ENCODE measurements at regions of chr9 and their contacts with region 1.

Region 1: GRCh38 chr9:37485389-37486219 is at the start of gene POLR1E:
- DNase-seq: peak; percentile 92
- ATAC-seq: peak; percentile 95
- H3K4me3 ChIP-seq: peak within 1 kb of the TSS; percentile 79 to 86 (median 82)
- H3K27ac ChIP-seq: peak within 1 kb of the TSS; percentile 84
- H3K4me1 ChIP-seq: peaks cover 52% of the 10 kb centered on the region
- H3K27me3 ChIP-seq: no peaks in the 10 kb centered on the region; a peak in 1 of 5 replicates
- CTCF ChIP-seq: peak; percentile 41
- EP300 ChIP-seq: no peak
- POLR2A ChIP-seq: peak; percentile 88 to 91
- RAD21 ChIP-seq: no peak
- total RNA-seq, gene POLR1E: 37.8 and 49.1 TPM in 2 replicates

Region 2: GRCh38 chr9:37239224-37239859 is 246.3 kb before region 1 on chr9:
- CTCF ChIA-PET with region 1: no interaction called
- POLR2A ChIA-PET with region 1: no interaction called
- in situ Hi-C with region 1: no loop called
- intact Hi-C with region 1: no loop called
- DNase-seq: peak; percentile 45
- ATAC-seq: peak; percentile 75
- H3K4me3 ChIP-seq: no peak overlapping the region
- H3K27ac ChIP-seq: peak overlapping the region; percentile 45
- H3K4me1 ChIP-seq: peaks cover 19% of the 10 kb centered on the region
- H3K27me3 ChIP-seq: no peaks in the 10 kb centered on the region
- CTCF ChIP-seq: no peak
- EP300 ChIP-seq: no peak
- POLR2A ChIP-seq: no peak
- RAD21 ChIP-seq: no peak

Region 3: DNA sequence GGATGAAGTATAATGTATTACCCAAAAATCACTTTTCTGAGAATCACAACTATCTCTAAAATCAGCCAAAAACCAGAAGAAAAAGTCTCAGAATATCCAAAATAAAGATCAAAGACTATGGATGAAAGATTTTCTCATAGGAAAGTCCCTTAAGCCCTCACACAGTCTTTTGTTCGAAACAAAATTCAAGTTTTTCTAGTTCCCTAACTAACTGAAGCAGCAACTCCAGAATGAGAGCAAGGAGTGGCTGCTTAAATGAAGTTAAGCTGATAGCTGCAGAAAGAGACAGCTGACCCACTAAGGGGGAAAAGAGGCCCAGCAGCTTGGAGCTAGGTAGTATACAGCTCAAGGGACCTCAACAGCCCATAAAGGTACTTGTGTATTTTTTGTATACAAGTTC is 28.8 kb before region 1 on chr9:
- CTCF ChIA-PET with region 1: no interaction called
- POLR2A ChIA-PET with region 1: no interaction called
- in situ Hi-C with region 1: no loop called
- intact Hi-C with region 1: no loop called
- DNase-seq: no peak
- ATAC-seq: no peak
- H3K4me3 ChIP-seq: no peak overlapping the region
- H3K27ac ChIP-seq: no peak overlapping the region
- H3K4me1 ChIP-seq: peaks cover 76% of the 10 kb centered on the region
- H3K27me3 ChIP-seq: no peaks in the 10 kb centered on the region
- CTCF ChIP-seq: no peak
- EP300 ChIP-seq: no peak
- POLR2A ChIP-seq: no peak
- RAD21 ChIP-seq: no peak

Region 4: GRCh38 chr9:37511016-37512010 is 25.7 kb after region 1 on chr9:
- CTCF ChIA-PET with region 1: no interaction called
- POLR2A ChIA-PET with region 1: interaction called, 16 read pairs
- in situ Hi-C with region 1: no loop called
- intact Hi-C with region 1: no loop called
- DNase-seq: peak; percentile 29
- ATAC-seq: peak; percentile 21
- H3K4me3 ChIP-seq: no peak overlapping the region
- H3K27ac ChIP-seq: no peak overlapping the region
- H3K4me1 ChIP-seq: peaks cover 44% of the 10 kb centered on the region
- H3K27me3 ChIP-seq: no peaks in the 10 kb centered on the region
- CTCF ChIP-seq: peak; percentile 56
- EP300 ChIP-seq: no peak
- POLR2A ChIP-seq: no peak
- RAD21 ChIP-seq: no peak

Region 5: GRCh38 chr9:37550781-37551180 is 65.2 kb after region 1 on chr9:
- CTCF ChIA-PET with region 1: no interaction called
- POLR2A ChIA-PET with region 1: no interaction called
- in situ Hi-C with region 1: no loop called
- intact Hi-C with region 1: no loop called
- DNase-seq: no peak
- ATAC-seq: no peak
- H3K4me3 ChIP-seq: no peak overlapping the region
- H3K27ac ChIP-seq: no peak overlapping the region
- H3K4me1 ChIP-seq: no peaks in the 10 kb centered on the region
- H3K27me3 ChIP-seq: no peaks in the 10 kb centered on the region
- CTCF ChIP-seq: no peak
- EP300 ChIP-seq: no peak
- POLR2A ChIP-seq: no peak
- RAD21 ChIP-seq: no peak

Region 6: DNA sequence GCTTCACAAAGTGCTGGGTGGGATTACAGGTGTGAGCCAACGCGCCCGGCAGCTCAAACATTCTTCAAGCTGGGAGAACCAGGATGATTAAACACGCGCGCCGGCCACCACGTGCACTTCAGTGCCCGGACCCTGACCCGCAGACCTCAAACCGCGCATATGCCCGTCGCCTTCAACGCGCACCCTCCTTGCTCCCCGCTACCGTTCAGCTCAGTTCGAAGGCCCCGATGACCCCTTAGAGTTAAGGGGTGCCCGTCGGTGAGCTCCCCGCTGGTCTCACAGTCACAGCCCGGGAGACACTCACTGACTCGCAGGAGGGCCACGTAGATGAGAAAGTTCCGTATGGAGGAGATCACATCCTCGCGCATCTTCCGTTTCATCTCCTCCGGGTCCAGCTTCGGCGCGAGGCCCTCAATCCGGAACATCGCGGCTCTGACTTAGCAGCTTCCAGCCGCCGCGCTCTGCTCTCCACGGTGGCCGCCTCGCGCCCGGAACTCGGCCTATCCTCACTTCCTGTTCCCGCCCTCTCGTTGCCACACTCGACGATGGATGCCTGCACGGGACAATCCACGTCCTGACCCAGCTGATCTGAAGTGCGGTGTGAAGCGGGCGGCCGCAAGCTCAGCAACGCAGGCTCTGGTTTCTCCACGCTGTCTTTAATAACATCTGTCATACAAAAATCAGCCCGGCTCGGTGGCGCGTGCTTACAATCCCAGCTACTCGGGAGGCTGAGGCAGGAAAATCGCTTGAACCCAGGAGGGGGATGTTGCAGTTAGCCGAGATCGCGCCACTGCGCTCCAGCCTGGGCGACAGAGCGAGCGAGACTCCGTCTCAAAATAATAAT is 106.7 kb after region 1 on chr9 and contains the start of gene TOMM5:
- CTCF ChIA-PET with region 1: interaction called, 3 read pairs
- POLR2A ChIA-PET with region 1: interaction called, 14 read pairs
- in situ Hi-C with region 1: loop called (anchors 5 kb)
- intact Hi-C with region 1: loop called (anchors 5 kb)
- DNase-seq: peak; percentile 87
- ATAC-seq: peak; percentile 95
- H3K4me3 ChIP-seq: peak within 1 kb of the TSS; percentile 64 to 89 (median 80)
- H3K27ac ChIP-seq: peak within 1 kb of the TSS; percentile 87
- H3K4me1 ChIP-seq: peaks cover 54% of the 10 kb centered on the region
- H3K27me3 ChIP-seq: no peaks in the 10 kb centered on the region; a peak in 1 of 5 replicates
- CTCF ChIP-seq: peak; percentile 32; the same call in 1 of the 2 replicates
- EP300 ChIP-seq: peak; percentile 19 to 71; a peak in 1 of 4 replicates
- POLR2A ChIP-seq: peak; percentile 95 to 97
- RAD21 ChIP-seq: no peak; the same call in 1 of the 2 replicates
- total RNA-seq, gene TOMM5: 315 and 450 TPM in 2 replicates

Region 7: DNA sequence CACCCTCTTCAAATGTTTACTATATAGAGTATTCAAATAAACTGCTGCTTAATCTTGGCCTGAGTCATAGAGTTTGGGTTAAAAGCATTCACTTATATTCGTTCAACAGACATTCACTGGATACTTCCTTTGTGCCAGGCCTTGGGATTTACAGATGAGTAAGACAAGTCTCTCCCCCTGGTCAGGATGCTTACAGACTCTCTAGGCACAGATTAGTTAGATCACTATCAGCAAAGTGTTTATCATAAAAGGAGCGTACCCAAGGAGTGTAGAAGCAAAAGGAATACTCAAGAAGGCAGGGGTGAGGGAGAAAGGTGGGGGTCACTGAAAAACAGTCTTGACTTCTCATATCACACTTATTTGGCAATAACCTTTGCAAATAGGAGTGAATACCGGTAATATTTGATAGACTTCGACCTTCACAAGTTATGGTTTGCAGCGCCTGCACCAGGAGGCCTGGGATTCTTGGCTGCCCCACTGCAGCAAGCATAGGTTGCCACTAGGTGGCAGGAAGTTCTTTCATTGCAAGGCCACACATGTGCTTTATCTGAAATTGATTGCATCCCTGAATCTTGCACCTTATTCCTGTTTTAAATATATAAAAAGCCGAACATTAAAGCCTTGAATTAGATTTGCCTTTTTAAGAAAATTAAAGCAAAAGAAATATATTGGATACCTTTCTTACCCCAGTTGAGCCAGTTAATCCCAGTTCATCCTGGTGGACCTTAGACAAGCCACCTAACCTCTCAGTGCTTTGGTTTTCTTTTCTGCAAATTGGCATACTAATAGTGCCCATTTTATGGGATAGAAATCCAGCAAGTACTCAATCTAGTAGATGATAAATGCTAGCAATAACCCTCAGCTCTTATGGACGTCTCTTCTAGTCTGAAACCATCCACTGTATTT is 261.5 kb after region 1 on chr9:
- CTCF ChIA-PET with region 1: interaction called, 3 read pairs
- POLR2A ChIA-PET with region 1: no interaction called
- in situ Hi-C with region 1: loop called (anchors 25 kb)
- intact Hi-C with region 1: loop called (anchors 2 kb)
- DNase-seq: peak; percentile 53
- ATAC-seq: peak; percentile 87
- H3K4me3 ChIP-seq: no peak overlapping the region; a peak in 1 of 6 replicates
- H3K27ac ChIP-seq: no peak overlapping the region
- H3K4me1 ChIP-seq: peaks cover 13% of the 10 kb centered on the region
- H3K27me3 ChIP-seq: peaks cover 5 to 29% of the 10 kb centered on the region in 2 experiments
- CTCF ChIP-seq: peak; percentile 83
- EP300 ChIP-seq: no peak
- POLR2A ChIP-seq: no peak
- RAD21 ChIP-seq: peak; percentile 50; the same call in 1 of the 2 replicates

Region 8: GRCh38 chr9:37800631-37801286 is 315.2 kb after region 1 on chr9 and contains the start of gene DCAF10:
- CTCF ChIA-PET with region 1: no interaction called
- POLR2A ChIA-PET with region 1: no interaction called
- in situ Hi-C with region 1: loop called (anchors 10 kb)
- intact Hi-C with region 1: no loop called
- DNase-seq: peak; percentile 72
- ATAC-seq: peak; percentile 92
- H3K4me3 ChIP-seq: peak within 1 kb of the TSS; percentile 93 to 96 (median 94)
- H3K27ac ChIP-seq: peak within 1 kb of the TSS; percentile 89
- H3K4me1 ChIP-seq: peaks cover 32% of the 10 kb centered on the region
- H3K27me3 ChIP-seq: no peaks in the 10 kb centered on the region
- CTCF ChIP-seq: peak; percentile 55
- EP300 ChIP-seq: peak in 1 of 2 experiments; percentile 67; a peak in 2 of 4 replicates
- POLR2A ChIP-seq: peak; percentile 80 to 85
- RAD21 ChIP-seq: peak; percentile 62; the same call in 1 of the 2 replicates
- total RNA-seq, gene DCAF10: 9.2 and 13.5 TPM in 2 replicates

Region 9: GRCh38 chr9:37913480-37914153 is 428.0 kb after region 1 on chr9:
- CTCF ChIA-PET with region 1: interaction called, 4 read pairs
- POLR2A ChIA-PET with region 1: interaction called, 10 read pairs
- in situ Hi-C with region 1: loop called (anchors 25 kb)
- intact Hi-C with region 1: loop called (anchors 2 kb)
- DNase-seq: peak; percentile 81
- ATAC-seq: peak; percentile 78
- H3K4me3 ChIP-seq: no peak overlapping the region
- H3K27ac ChIP-seq: no peak overlapping the region
- H3K4me1 ChIP-seq: peaks cover 17% of the 10 kb centered on the region
- H3K27me3 ChIP-seq: no peaks in the 10 kb centered on the region
- CTCF ChIP-seq: peak; percentile 98
- EP300 ChIP-seq: no peak
- POLR2A ChIP-seq: 0 out of 4 replicates have a peak, but pooled peaks of 1 of the 2 experiments have one; percentile 19
- RAD21 ChIP-seq: peak; percentile 91

Region 10: DNA sequence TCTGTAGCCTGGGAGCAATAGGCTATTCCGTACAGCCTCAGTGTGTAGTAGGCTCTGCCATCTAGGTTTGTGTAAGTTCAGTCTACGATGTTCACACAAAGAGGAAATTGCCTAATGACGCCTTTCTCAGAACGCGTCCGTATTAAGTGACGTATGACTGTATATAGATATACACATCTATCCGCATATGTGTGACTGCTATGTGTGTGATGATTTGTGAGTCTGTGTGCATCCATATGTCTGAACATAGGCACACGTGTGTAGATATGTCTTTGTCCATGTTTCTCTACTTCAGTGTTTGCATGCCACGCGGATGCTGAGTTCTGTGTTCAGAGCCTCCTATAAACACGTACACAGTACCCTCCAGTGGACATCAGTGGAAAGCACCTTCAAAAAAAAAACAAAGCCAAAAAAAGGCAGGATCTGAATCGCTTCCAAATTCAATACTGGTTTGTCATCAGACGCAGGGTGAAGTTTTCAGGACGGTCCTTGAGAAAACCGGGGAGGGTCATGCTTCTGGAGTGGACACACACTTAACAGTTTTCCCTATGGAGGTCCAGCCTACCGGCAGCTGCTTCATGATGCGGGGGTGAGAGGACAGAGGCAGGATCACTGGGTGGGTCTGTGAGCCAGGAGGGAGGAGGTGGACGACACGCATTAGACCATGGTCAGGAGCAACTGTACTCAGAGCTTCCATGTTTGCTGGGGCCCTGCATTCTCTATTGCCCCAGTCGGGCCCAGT is 877.4 kb after region 1 on chr9:
- CTCF ChIA-PET with region 1: no interaction called
- POLR2A ChIA-PET with region 1: no interaction called
- in situ Hi-C with region 1: loop called (anchors 25 kb)
- intact Hi-C with region 1: no loop called
- DNase-seq: peak; percentile 49
- ATAC-seq: peak; percentile 29
- H3K4me3 ChIP-seq: no peak overlapping the region
- H3K27ac ChIP-seq: no peak overlapping the region
- H3K4me1 ChIP-seq: peaks cover 28% of the 10 kb centered on the region
- H3K27me3 ChIP-seq: no peaks in the 10 kb centered on the region
- CTCF ChIP-seq: peak; percentile 81
- EP300 ChIP-seq: no peak
- POLR2A ChIP-seq: no peak
- RAD21 ChIP-seq: 0 out of 2 replicates have a peak, but pooled peaks have one; percentile 41

Measured in HepG2 (cell line).